Naive thymus-derived CD4-positive, alpha-beta T cell (primary cell): ENCODE measurements at regions of chr19 and their contacts with region 1.

Region 1: DNA sequence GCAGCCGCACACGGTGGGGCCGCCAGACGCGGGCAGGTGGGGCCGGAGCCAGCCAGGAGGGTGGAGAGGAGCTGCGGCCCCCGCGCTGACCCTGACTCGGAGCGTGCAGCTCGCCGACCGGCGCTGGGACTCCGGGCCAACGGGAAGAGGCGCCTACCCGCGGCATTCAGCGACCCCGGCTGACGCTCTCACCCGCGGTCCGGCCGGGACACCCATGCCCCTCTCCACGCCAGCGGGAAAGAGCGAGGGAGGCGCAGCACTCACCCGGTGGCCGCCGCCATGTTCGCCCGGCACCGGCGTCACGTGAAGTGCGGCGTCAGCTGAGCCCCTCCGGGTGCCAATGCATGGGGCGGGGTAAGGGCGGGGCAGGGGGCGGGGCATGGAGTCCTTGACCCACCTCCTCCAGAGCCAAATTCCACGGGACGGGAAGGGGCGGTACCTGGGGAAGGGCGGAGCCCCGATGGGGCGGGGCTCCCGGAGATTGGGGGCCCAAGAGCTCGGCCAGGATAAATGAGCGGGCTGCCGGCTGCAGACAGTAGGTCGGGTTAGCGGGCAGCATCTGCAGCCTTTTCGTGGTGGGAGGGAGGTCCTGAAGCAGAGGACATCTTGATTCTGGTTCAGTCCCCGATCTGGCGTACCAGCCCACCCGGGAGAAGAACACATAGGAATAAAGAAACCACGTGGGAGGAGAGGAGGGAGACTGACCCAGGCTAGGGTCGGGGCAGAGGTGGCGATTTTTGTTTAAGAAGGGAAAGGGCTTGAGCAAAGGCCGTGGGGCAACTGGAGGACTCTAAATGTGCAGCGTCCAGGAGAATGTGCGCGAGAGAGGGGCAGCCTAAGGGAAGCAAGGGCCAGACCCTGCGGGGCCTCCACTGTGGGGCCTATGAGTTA is at the start of gene PEPD:
- DNase-seq: peak; percentile 53 to 82 (median 62)
- ATAC-seq: peak; percentile 95
- H3K4me3 ChIP-seq: peak within 1 kb of the TSS; percentile 82
- H3K4me3 Mint-ChIP-seq: peak within 1 kb of the TSS; percentile 75 to 91 (median 88)
- H3K27ac ChIP-seq: peak within 1 kb of the TSS; percentile 65
- H3K27ac Mint-ChIP-seq: peak within 1 kb of the TSS; percentile 69 to 95 (median 83)
- H3K4me1 ChIP-seq: peaks cover 13 to 14% of the 10 kb centered on the region in 2 donors
- H3K4me1 Mint-ChIP-seq: peaks cover 17 to 29% (median 25%) of the 10 kb centered on the region in 7 donors
- H3K27me3 ChIP-seq: no peaks in the 10 kb centered on the region
- H3K27me3 Mint-ChIP-seq: peaks cover 0 to 10% (median 0%) of the 10 kb centered on the region in 5 donors
- total RNA-seq, gene PEPD: 21.9 to 35.6 (median 24.5) TPM

Region 2: GRCh38 chr19:33416307-33417215 is 105.2 kb before region 1 on chr19:
- CTCF ChIA-PET with region 1: no interaction called
- POLR2A ChIA-PET with region 1: no interaction called
- intact Hi-C with region 1: loop called in 1 of 2 experiments (anchors 5 kb)
- DNase-seq: peak; percentile 31 to 64 (median 53)
- ATAC-seq: peak; percentile 81
- H3K4me3 ChIP-seq: peak overlapping the region; percentile 21
- H3K4me3 Mint-ChIP-seq: peak overlapping the region; percentile 61 to 80 (median 72)
- H3K27ac ChIP-seq: no peak overlapping the region
- H3K27ac Mint-ChIP-seq: peak overlapping the region in 3 of 9 donors; percentile 8 to 38 (median 36)
- H3K4me1 ChIP-seq: no peaks in the 10 kb centered on the region
- H3K4me1 Mint-ChIP-seq: peaks cover 2 to 9% (median 8%) of the 10 kb centered on the region in 7 donors
- H3K27me3 ChIP-seq: no peaks in the 10 kb centered on the region
- H3K27me3 Mint-ChIP-seq: no peaks in the 10 kb centered on the region

Region 3: GRCh38 chr19:33430674-33431277 is 90.9 kb before region 1 on chr19:
- CTCF ChIA-PET with region 1: no interaction called
- POLR2A ChIA-PET with region 1: no interaction called
- intact Hi-C with region 1: loop called in 1 of 2 experiments (anchors 5 kb)
- DNase-seq: peak in 7 of 9 donors; percentile 41 to 69 (median 53)
- ATAC-seq: peak; percentile 83
- H3K4me3 ChIP-seq: no peak overlapping the region
- H3K4me3 Mint-ChIP-seq: peak overlapping the region; percentile 1 to 76 (median 50)
- H3K27ac ChIP-seq: peak overlapping the region; percentile 37
- H3K27ac Mint-ChIP-seq: peak overlapping the region in 7 of 9 donors; percentile 65 to 90 (median 80)
- H3K4me1 ChIP-seq: peaks cover 9 to 13% of the 10 kb centered on the region in 2 donors
- H3K4me1 Mint-ChIP-seq: peaks cover 3 to 16% (median 11%) of the 10 kb centered on the region in 7 donors
- H3K27me3 ChIP-seq: no peaks in the 10 kb centered on the region
- H3K27me3 Mint-ChIP-seq: peaks cover 0 to 4% (median 0%) of the 10 kb centered on the region in 5 donors

Region 4: DNA sequence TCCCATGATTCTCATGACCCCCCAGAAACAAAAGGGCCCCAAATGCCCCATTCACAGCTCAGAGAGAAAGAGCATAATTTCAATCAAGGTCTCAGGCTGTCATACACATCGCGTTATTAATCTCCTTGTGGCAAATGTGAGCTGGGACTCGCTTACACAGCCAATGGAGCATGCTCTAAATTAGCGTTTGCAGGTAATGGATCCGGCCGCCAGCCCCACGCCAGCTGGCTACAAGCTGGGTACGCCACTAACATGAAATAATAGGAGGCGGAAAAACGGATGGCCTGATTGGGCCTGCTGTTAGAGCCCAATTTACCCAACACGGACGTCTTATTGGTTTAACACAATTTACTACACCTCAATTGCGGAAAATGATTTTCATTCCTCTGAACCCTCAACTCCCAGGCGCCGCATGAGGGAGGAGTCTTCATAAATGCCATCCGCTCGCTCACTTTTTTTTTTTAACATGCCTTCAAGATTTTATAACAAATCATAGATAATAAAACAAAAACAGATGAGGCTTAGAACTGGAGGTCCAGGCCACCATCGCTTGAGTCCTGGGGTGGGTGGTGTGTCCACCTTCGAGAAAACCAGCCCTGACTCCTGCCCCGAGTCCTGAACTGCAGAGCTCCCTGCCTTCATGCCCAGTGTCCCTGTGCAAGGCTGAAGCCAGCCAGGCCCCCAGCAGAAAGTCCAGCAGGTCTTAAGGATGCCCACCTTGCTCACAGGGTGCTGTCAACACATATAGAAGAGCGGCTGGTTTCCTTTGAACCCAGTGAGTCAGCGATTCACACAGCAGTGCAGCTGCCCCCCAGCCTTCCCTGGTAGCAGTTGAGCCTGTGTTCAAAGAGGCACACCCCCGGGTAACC is 62.3 kb before region 1 on chr19:
- CTCF ChIA-PET with region 1: no interaction called
- POLR2A ChIA-PET with region 1: no interaction called
- intact Hi-C with region 1: no loop called
- DNase-seq: no peak
- ATAC-seq: no peak
- H3K4me3 ChIP-seq: no peak overlapping the region
- H3K4me3 Mint-ChIP-seq: no peak overlapping the region
- H3K27ac ChIP-seq: no peak overlapping the region
- H3K27ac Mint-ChIP-seq: no peak overlapping the region
- H3K4me1 ChIP-seq: no peaks in the 10 kb centered on the region
- H3K4me1 Mint-ChIP-seq: peaks cover 0 to 2% (median 0%) of the 10 kb centered on the region in 7 donors
- H3K27me3 ChIP-seq: no peaks in the 10 kb centered on the region
- H3K27me3 Mint-ChIP-seq: no peaks in the 10 kb centered on the region